ENCODE measurements at regions of chr2 and their contacts with region 1.

Region 1: GRCh38 chr2:196337208-196337953 is 166.0 kb upstream of the STK17B start:
- DNase-seq: peak; percentile 31
- H3K4me3 Mint-ChIP-seq: no peak overlapping the region
- H3K27ac Mint-ChIP-seq: no peak overlapping the region
- H3K4me1 Mint-ChIP-seq: peaks cover 5% of the 10 kb centered on the region
- H3K27me3 Mint-ChIP-seq: no peaks in the 10 kb centered on the region

Region 2: DNA sequence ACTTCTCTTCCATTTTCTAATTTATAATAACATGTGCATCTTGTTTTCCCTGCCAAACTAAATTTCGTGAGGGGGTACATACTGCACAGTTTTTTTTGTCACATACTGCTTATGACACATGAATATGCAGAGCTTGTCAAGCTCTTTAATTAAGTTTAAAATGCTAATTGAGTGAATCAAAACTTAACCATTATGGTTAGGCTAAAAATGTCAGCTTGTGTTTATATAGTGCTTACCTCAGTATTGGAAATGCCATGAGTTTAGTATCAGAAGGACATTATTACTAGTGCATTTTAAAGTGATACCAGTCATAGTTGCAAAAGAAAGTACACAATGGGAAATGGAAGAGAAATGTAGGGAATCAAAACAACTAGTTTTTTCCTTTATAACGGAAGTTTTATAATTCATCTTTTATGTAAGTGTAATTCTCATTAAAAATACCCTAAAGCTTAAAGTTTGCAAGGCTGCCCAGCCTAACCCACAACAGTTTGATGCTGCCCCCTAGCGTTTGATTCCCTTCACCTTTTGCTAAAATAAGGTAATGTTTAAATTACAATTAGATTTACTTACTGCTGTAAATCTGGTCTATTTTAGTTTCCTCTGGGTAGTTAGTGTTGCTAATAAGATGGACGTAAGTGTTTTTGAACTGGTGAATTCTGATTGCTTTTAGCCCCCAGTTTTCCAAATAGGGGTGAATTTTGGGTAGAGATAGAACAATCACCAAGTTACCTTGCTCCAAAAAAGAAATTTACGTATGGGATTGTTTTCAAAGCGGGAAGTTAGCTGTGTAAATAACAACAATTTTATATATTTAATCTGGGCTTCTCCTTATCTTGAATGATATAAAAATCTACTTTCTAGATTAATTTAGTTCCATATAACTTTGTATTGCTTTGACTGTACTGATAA is 677.1 kb before region 1 on chr2:
- CTCF ChIA-PET with region 1: no interaction called
- POLR2A ChIA-PET with region 1: no interaction called
- intact Hi-C with region 1: no loop called
- DNase-seq: peak; percentile 76
- H3K4me3 Mint-ChIP-seq: peak overlapping the region; percentile 98
- H3K27ac Mint-ChIP-seq: peak overlapping the region; percentile 100
- H3K4me1 Mint-ChIP-seq: peaks cover 45% of the 10 kb centered on the region
- H3K27me3 Mint-ChIP-seq: peaks cover 3% of the 10 kb centered on the region

Region 3: GRCh38 chr2:196131384-196131937 is 205.9 kb before region 1 on chr2:
- CTCF ChIA-PET with region 1: interaction called, 23 read pairs
- POLR2A ChIA-PET with region 1: no interaction called
- intact Hi-C with region 1: loop called (anchors 1 kb)
- DNase-seq: peak; percentile 75
- H3K4me3 Mint-ChIP-seq: no peak overlapping the region
- H3K27ac Mint-ChIP-seq: peak overlapping the region; percentile 79
- H3K4me1 Mint-ChIP-seq: peaks cover 12% of the 10 kb centered on the region
- H3K27me3 Mint-ChIP-seq: no peaks in the 10 kb centered on the region

Region 4: GRCh38 chr2:196143730-196144131 is 193.7 kb before region 1 on chr2:
- CTCF ChIA-PET with region 1: interaction called, 10 read pairs
- POLR2A ChIA-PET with region 1: no interaction called
- intact Hi-C with region 1: no loop called
- DNase-seq: no peak
- H3K4me3 Mint-ChIP-seq: no peak overlapping the region
- H3K27ac Mint-ChIP-seq: peak overlapping the region; percentile 87
- H3K4me1 Mint-ChIP-seq: peaks cover 59% of the 10 kb centered on the region
- H3K27me3 Mint-ChIP-seq: no peaks in the 10 kb centered on the region

Region 5: GRCh38 chr2:196291873-196292800 is 45.2 kb before region 1 on chr2:
- CTCF ChIA-PET with region 1: interaction called, 15 read pairs
- POLR2A ChIA-PET with region 1: no interaction called
- intact Hi-C with region 1: no loop called
- DNase-seq: no peak
- H3K4me3 Mint-ChIP-seq: peak overlapping the region; percentile 10
- H3K27ac Mint-ChIP-seq: no peak overlapping the region
- H3K4me1 Mint-ChIP-seq: peaks cover 49% of the 10 kb centered on the region
- H3K27me3 Mint-ChIP-seq: no peaks in the 10 kb centered on the region

Region 6: GRCh38 chr2:196322973-196323810 is 14.2 kb before region 1 on chr2:
- CTCF ChIA-PET with region 1: interaction called, 16 read pairs
- POLR2A ChIA-PET with region 1: no interaction called
- intact Hi-C with region 1: no loop called
- DNase-seq: no peak
- H3K4me3 Mint-ChIP-seq: no peak overlapping the region
- H3K27ac Mint-ChIP-seq: no peak overlapping the region
- H3K4me1 Mint-ChIP-seq: no peaks in the 10 kb centered on the region
- H3K27me3 Mint-ChIP-seq: peaks cover 4% of the 10 kb centered on the region

Region 7: GRCh38 chr2:196361606-196362326 is 24.4 kb after region 1 on chr2:
- CTCF ChIA-PET with region 1: interaction called, 10 read pairs
- POLR2A ChIA-PET with region 1: no interaction called
- intact Hi-C with region 1: no loop called
- DNase-seq: no peak
- H3K4me3 Mint-ChIP-seq: no peak overlapping the region
- H3K27ac Mint-ChIP-seq: no peak overlapping the region
- H3K4me1 Mint-ChIP-seq: peaks cover 4% of the 10 kb centered on the region
- H3K27me3 Mint-ChIP-seq: peaks cover 4% of the 10 kb centered on the region

Region 8: DNA sequence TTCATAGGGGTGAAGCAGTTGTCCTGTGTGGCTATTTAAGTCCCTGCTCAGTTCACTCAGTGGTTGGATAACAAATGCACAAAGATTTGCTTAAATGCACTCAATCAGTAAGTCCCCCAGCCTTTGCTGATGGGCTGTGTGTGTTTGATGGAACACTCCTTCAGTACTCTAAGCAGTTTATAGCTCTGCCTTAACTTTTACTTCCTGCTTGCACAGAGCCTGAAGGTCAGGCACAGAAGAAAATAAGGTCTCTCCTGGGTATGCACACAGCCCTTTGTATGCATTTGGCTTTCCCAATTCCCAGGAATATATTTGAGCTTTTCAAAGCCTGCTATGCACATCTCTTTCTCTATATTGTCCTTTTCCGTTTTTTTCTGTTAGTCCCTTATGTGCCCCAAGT is 42.7 kb after region 1 on chr2:
- CTCF ChIA-PET with region 1: no interaction called
- POLR2A ChIA-PET with region 1: no interaction called
- intact Hi-C with region 1: no loop called
- DNase-seq: no peak
- H3K4me3 Mint-ChIP-seq: no peak overlapping the region
- H3K27ac Mint-ChIP-seq: no peak overlapping the region
- H3K4me1 Mint-ChIP-seq: peaks cover 10% of the 10 kb centered on the region
- H3K27me3 Mint-ChIP-seq: peaks cover 3% of the 10 kb centered on the region

Region 9: DNA sequence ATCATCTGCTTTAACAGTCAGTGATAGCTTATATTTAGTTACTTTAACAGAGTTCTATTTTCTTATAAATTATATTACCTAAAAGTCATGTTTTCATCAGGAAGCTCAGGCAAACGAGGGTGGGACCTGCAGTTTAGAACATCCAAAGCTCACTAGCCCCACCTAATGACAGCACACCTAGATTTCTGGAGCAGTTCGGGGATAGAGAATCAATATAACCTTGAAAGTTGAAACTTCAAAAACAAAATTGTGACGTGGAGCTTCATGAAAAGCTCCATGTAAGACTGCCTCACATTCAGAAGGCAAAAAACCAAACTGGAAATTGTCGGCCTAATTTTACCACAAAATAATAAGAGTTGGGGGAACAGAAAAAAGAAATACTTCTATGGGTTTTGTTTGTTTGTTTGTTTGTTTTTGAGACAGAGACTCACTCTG is 116.2 kb after region 1 on chr2:
- CTCF ChIA-PET with region 1: interaction called, 28 read pairs
- POLR2A ChIA-PET with region 1: no interaction called
- intact Hi-C with region 1: loop called (anchors 10 kb)
- DNase-seq: peak; percentile 45
- H3K4me3 Mint-ChIP-seq: no peak overlapping the region
- H3K27ac Mint-ChIP-seq: no peak overlapping the region
- H3K4me1 Mint-ChIP-seq: no peaks in the 10 kb centered on the region
- H3K27me3 Mint-ChIP-seq: peaks cover 12% of the 10 kb centered on the region